Right ventricle myocardium inferior (tissue), 1 donor: ENCODE measurements at regions of chr13 and their contacts with region 1.

Region 1: DNA sequence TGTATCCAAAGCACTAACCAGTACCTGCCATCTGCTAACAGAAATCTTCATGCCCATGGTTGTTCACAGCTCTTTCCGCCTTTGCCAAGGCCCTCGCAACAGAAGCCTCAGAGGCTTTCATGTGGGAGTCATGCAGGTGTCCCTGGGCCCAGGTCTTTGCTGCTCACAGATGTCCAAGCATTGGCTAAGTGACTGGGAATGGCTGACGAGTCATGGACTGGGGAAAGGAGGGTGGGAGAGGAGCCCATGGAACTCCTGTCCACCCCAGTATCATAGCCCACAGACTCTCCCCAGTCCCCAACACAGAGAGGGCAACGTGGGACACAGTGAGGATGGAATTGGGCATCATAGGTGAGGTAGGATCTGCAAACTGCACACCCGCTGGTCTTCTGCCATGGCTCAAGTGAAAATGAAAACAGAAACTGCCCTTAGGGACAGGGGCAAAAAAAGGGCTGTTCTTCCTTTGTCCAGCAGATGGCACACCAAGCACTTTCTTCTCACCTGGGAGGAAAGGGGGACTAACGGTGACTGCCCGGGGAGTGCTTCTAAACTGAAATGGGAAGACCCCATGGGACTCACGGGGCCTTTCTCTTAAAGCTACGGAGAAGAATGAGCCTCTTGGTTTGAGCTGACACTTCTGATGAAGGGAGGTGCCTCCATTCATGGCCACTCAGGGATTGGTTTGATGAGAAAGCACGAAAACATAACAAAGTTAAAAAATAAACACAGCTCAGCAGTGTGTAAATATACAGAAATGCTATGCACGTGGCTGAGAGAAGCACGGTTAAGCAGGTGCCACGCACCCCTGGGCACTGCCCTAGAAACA is 11.1 kb upstream of the DHRS12 start:
- DNase-seq: no peak
- ATAC-seq: peak; percentile 61

Region 2: GRCh38 chr13:51276636-51277035 is 538.4 kb before region 1 on chr13:
- intact Hi-C with region 1: no loop called
- DNase-seq: no peak
- ATAC-seq: no peak

Region 3: DNA sequence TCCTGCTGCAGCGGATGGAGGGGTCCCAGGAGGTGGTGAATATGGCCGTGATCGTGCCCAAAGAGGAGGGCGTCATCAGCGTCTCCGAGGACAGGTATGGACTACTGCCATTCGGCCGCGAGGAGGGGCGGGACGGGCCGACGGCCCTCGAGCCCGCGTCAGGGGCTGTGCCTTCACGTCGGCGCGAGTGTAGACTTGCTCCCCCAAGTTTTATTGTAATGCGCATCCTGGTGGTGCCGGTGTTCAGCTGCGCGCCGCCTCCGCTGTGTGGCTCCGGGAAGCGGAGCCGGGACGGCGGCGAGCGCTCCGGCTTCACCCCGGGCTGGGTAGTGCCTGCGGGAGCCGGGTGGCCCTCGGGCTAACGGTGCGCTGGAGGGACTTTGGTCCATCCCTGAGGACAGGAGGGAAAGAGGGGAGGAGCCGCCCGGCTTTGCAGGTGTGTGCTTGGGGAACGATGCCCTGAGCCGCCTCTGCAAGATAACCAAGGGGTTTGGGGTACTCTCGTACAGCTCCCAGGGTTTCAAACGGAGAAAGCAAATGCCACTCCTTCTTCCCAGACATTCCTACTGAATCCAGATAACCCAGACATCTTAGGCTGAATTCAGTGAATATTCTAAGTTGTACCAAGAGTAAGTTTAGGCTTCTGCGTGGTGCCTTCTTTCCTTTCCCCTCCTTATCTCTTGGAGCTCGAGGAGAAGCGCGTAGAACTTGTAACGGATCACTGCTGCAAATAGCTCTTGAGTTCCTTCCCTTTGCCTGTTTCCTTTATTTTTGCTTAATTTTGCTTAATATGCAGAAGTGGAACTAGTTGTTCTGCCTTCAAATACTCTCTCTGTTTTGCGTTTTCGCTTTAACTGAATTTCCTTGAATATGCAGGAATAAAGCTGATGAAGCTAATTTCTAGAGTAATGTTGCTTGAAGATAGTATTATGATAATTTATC is 230.0 kb before region 1 on chr13:
- intact Hi-C with region 1: no loop called
- DNase-seq: peak; percentile 81
- ATAC-seq: peak; percentile 21

Region 4: GRCh38 chr13:51781246-51782022 is 33.6 kb before region 1 on chr13:
- intact Hi-C with region 1: no loop called
- DNase-seq: no peak
- ATAC-seq: no peak

Region 5: DNA sequence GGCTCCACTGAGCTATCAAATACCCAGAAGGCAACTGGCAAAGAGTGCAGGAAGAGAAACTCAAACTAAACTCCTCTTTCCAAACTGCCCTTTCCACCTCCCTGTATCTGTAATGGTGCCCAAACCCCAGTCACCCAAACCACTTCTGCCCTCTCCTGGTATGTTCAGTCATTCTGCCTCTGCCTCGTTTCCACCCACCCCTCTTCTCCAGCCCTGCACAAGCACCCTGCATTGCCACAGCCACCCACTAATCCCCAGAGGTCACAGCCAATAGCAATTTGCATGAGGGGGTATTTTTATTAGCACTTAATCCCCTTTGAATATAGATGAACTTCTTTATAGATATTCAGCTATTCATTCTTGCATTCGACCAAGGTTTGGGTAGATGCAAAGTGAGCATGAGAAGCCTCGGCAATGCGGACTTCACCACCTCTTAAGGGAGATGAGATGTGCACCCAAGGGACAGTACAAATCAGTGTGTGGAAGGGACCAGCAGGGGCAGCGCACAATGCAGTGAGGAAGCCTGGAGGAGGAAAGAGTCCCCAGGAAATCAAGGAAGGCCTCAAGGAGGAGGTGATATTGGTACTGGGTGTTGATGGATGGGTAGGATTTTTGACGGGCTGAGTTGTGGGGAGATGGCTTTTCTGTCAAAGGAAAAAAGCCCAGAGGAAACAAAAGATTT is 17.6 kb after region 1 on chr13:
- intact Hi-C with region 1: loop called (anchors 1 kb)
- DNase-seq: no peak
- ATAC-seq: peak; percentile 83

Region 6: DNA sequence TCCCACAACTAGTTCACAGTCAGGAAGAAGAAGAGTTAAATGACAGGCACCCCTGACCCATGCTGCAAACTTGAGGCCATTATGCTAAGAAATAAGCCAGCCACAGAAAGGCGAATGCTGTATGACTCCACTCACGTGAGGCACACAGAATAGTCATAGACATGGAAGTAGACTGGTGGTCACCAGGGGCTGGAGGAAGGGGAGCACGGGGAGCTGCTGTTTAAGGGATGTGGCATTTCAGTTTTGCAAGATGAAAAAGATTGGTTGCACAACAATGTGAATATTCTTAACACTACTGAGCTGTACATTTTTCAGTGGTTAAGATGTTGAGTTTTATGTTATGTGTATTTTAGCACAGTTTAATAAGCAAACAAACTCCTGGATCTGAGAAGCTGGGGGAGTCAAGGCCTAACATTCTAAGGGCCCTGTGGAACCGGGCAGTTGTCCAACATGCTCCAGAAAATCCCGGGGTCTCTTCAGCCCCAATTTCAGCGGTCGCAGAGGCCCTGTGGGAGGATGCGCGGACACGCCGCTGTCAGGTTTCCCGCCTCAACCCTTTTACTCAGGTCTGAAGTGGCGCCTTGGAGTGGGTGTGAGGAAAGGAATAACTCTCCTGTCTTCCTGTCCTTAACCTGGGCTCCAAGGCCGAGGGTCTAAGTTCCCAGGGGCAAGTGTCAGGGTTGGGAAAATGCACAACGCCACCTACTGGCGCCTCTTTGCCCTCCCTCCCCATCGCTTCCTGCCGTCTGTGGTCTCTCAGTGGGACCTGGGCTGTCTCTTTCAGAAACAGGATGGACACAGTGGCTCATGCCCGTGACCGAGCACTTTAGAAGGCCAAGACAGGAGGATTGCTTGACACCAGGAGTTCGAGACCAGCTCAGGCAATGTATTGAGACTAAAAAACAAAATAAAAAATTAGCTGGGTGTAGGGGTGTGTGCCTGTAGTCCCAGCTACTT is 34.4 kb after region 1 on chr13:
- intact Hi-C with region 1: no loop called
- DNase-seq: no peak
- ATAC-seq: no peak

Region 7: DNA sequence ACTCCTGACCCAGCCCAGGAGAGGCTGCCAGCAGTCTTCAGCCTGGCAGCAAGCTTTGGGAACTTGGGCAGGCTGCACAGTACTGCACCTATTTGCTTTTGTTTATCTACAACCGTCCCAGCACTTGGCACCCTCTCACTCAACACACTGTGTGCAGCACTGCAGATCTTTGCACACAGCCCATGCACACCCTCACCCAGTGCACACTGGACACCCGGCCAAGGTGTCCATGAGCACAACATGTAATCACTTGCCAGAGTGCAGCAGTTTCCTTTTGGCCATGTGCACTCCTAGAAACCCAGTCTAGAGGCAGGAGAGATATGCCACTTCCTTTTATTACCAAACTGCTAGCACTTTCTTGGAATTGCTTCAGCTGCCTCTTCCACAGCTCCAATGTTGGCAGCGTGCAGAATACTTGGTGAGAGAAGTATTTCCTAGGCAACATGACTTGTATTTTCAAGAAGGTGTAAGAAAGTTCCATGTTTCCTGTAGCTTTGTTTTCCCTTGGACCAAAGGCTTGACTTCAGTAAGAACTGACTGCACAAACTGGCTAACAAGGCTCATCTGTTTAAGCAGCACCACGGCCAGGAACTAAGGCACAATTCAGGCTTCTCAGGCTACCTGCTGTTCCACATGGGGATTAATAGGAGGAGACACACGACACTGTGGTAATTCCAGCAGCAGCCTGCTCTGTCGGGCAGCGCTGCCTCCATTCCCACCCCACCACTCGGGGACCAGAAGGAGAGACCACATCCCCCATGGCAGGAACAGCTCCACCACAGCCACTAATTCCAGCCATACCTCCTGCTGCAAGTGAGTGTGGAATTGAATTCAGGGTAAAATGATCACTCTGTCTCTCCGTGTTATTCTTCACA is 180.9 kb after region 1 on chr13:
- intact Hi-C with region 1: loop called (anchors 10 kb)
- DNase-seq: peak; percentile 77
- ATAC-seq: peak; percentile 76